Dendritic cell treated with granulocyte-macrophage colony-stimulating factor and Interleukin-4, amounts not matched to agents 40 ng/mL and 50 ng/mL, for 4 days (primary cell): ENCODE measurements at regions of chr20 and their contacts with region 1.

Region 1: GRCh38 chr20:2756056-2756611 is 44.3 kb downstream of the CPXM1 start:
- H3K4me3 Mint-ChIP-seq: no peak overlapping the region
- H3K27ac Mint-ChIP-seq: no peak overlapping the region
- H3K4me1 Mint-ChIP-seq: peaks cover 40% of the 10 kb centered on the region
- H3K27me3 Mint-ChIP-seq: peaks cover 53% of the 10 kb centered on the region

Region 2: DNA sequence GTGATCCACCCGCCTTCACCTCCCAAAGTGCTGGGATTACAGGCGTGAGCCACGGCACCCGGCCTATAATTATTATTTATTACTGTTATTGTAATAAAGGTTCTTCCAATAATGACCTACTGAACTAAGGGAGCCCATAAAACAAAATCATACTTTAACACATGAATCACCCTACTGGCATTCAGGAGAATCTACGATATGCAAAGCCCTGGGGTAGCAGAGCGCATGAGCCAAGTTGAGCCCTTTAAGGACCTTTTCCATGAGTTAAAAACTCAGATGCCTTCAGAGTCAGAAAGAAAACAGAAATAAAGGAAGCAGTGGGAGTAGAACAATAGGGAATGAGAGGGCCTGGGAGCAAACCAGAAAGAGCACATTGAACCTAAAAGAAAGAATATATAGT is 327.1 kb before region 1 on chr20:
- intact Hi-C with region 1: no loop called
- H3K4me3 Mint-ChIP-seq: no peak overlapping the region
- H3K27ac Mint-ChIP-seq: no peak overlapping the region
- H3K4me1 Mint-ChIP-seq: no peaks in the 10 kb centered on the region
- H3K27me3 Mint-ChIP-seq: peaks cover 32% of the 10 kb centered on the region

Region 3: DNA sequence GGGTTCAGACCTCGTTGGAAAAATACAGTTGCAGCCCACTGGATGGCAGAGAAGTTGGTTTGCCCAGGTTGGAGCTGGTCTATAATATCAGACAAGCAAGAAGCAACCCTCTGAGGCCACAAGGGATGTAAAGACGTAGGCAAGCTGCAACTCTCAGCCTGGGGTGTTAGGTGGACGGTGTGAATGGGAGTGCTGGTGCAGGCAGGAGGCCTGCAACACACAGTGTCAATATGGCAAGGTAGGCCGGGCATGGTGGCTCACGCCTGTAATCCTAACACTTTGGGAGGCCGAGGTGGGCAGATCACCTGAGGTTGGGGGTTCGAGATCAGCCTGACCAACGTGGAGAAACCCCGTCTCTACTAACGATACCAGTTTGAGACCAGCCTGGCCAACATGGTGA is 95.0 kb after region 1 on chr20:
- intact Hi-C with region 1: loop called (anchors 5 kb)
- H3K4me3 Mint-ChIP-seq: no peak overlapping the region
- H3K27ac Mint-ChIP-seq: no peak overlapping the region
- H3K4me1 Mint-ChIP-seq: peaks cover 12% of the 10 kb centered on the region
- H3K27me3 Mint-ChIP-seq: no peaks in the 10 kb centered on the region